ENCODE measurements at regions of chr12 and their contacts with region 1.

Region 1: DNA sequence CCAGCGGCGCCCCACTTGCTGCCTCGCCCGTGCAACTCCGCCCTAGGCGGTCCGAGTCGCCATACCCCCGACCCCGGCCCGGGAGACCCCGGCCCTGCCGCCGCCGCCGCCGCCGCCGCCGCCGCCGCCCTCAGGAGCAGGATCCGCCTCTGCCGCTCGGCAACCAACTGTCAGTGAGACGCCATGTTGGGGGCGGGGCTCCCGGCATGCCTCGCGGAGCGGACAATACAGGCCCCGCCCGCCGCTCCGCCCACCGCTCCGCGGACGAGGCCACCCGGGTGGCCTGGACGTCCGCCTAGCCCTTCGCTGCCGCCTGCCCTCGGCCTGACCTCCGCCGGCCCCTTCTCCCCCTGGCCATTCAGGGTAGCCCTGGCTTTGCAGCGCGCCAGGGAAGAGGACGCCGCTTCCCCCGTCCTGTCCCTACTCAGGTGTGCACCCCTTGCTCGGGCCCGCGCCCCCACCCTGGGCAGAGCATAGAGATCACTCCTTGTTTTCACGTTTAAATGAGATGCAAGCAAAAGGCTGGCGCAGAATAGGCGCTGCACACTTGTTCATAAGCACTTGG is at the start of gene HECTD4:
- DNase-seq: peak; percentile 75 to 97
- H3K4me3 ChIP-seq: peak within 1 kb of the TSS; percentile 78 to 99
- H3K27ac ChIP-seq: peak within 1 kb of the TSS; percentile 68 to 69
- H3K4me1 ChIP-seq: peaks cover 0 to 16% of the 10 kb centered on the region in 2 donors
- H3K27me3 ChIP-seq: no peaks in the 10 kb centered on the region
- CTCF ChIP-seq: no peak
- total RNA-seq, gene HECTD4: 23.7 TPM

Region 2: GRCh38 chr12:111975161-111975931 is 407.0 kb before region 1 on chr12:
- intact Hi-C with region 1: no loop called
- DNase-seq: no peak
- H3K4me3 ChIP-seq: no peak overlapping the region
- H3K27ac ChIP-seq: no peak overlapping the region
- H3K4me1 ChIP-seq: no peaks in the 10 kb centered on the region
- H3K27me3 ChIP-seq: no peaks in the 10 kb centered on the region
- CTCF ChIP-seq: no peak

Region 3: DNA sequence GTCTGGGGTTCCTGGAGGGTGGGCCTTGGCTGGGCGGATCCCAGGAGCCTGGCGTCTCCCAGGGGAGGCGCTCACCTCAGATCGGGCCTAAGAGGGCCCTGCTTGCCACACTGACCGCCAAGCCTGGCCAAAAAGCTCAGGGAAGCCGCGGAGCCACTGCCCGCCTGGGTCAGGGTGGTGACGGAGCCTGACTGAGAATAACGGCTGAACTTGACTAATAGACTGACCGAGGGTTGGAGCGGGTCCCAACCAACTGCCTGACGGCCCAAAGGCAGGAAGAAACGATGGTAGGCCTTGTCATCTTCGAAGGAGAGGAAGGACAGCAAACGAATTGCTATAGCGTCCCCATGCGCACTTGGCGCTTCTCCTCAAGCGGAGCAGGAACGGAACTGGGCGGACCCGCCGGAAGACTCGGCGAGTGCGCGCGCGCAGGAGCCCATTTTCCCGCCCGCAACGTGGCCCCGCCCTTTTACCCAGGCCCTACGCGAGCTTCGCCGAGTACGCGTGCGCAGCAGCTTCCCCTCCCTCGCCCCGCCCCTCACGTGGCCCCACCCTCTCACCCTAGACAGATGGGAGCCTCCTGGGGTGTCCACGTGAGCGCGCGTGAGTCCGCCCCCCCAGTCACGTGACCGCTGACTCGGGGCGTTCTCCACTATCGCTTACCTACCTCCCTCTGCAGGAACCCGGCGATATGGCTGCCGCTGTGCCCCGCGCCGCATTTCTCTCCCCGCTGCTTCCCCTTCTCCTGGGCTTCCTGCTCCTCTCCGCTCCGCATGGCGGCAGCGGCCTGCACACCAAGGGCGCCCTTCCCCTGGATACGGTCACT is 369.3 kb before region 1 on chr12 and contains the starts of genes ERP29 and TMEM116:
- intact Hi-C with region 1: loop called (anchors 10 kb)
- DNase-seq: peak; percentile 97 to 100
- H3K4me3 ChIP-seq: peak within 1 kb of the TSS; percentile 85
- H3K27ac ChIP-seq: peak within 1 kb of the TSS; percentile 97 to 99
- H3K4me1 ChIP-seq: peaks cover 3 to 20% of the 10 kb centered on the region in 2 donors
- H3K27me3 ChIP-seq: no peaks in the 10 kb centered on the region
- CTCF ChIP-seq: peak; percentile 77 to 85 (median 82)
- total RNA-seq, gene ERP29: 21.6 TPM
- total RNA-seq, gene TMEM116: 2.2 TPM

Region 4: DNA sequence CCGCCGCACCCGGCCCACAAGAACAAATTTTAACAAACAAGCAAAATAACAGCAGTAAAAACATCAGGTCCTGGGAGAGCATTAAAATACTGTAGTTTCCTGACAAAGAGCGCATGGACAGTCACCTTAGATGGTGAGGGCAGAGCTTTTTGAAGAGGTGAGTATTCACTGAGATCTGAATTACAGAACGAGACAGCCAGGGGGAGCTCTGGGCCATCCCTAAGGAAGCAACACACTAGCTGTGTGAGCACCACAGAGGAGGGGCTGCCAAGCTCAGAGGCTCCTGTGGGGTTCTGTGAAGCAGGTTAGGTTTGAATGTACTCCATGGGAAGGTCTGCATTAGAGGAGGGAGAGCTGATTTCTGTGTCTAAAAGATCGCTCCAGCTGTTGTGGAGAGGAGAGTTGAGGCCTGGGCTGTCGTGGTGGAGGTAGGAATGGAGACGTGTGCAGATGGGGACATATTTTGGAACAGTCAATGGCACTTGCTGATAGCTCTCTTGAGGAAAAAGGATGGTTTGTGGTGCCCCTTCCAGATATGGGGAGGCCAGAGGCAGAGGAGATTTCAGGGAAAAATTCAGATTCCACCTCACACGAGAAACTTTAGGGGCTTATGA is 184.1 kb before region 1 on chr12:
- intact Hi-C with region 1: loop called (anchors 2 kb)
- DNase-seq: no peak
- H3K4me3 ChIP-seq: no peak overlapping the region
- H3K27ac ChIP-seq: no peak overlapping the region
- H3K4me1 ChIP-seq: no peaks in the 10 kb centered on the region
- H3K27me3 ChIP-seq: no peaks in the 10 kb centered on the region
- CTCF ChIP-seq: peak in 2 of 3 experiments; percentile 15 to 42

Region 5: DNA sequence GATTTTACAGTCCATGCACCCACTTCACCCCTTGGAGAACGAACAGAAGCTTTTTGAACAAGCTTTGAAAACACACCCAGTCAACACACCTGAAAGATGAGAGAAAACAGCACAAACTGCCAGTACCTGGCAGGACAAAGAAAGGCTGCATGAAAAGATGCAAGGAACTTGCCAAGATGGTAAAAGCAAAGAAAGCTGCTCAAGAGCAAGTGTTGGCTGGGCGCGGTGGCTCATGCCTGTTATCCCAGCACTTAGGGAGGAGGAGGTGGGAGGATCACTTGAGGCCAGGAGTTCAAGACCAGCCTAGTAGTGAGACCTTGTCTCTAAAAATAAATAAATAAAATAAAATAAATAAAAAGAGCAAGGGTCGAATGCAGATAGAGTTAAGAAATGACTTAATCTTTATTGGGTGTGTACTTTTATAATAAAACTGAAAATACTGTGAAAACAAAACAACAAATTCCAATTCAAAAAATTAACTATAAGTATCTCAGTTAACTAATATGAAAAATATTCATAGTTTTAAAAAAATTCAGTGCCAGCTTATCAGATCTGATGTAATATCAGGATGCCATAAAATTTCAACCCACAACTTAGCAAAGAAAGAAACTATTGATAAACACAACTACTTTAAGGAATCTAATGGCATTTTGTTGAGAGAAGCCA is 59.3 kb before region 1 on chr12:
- intact Hi-C with region 1: loop called (anchors 5 kb)
- DNase-seq: no peak
- H3K4me3 ChIP-seq: no peak overlapping the region
- H3K27ac ChIP-seq: no peak overlapping the region
- H3K4me1 ChIP-seq: no peaks in the 10 kb centered on the region
- H3K27me3 ChIP-seq: no peaks in the 10 kb centered on the region
- CTCF ChIP-seq: no peak

Region 6: DNA sequence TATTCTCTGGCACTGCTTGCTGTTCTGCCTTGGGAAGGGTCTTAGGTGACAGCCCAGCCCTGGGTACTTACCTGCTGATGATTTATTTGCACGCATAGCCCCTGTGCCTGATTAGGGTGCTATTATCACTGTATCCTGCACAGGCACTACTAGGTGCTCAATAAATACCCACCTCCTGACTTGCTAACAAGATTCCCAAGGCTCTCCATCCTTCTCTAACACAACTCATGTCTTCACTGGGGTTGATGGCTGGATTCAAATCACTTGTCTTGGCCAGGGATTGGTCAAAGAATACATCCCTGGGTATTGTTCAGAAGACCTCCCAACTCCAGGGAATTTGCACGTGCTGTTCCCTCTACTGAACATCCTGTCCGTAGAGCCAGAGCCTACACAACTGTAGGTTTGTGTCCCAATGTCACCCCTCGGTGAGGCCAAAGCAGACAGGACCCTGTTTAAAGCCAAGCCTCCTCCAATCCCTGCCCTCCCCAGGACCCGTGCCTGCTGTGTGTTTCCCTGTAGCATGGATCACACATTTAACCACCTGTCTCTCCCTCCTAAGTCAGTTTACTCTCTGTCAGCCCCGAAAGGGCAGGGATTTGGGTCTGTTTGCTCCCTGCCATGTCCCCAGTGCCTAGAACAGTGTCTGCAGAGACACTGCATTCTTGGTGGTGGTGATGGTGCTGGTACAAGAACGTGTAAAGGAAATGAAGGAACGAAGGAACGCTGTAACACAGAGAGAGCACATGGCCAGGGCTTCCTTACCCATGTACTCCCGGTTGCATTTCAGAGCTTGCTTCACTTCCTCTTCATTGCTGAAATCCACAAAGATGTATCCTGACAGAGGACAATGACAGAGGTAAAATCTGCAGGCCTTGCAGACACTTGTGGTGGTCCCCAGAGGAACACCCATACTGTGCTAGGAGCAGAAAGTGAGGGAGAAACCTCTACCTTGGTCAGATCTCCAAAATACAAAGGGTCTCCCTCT is 1567.3 kb after region 1 on chr12:
- intact Hi-C with region 1: no loop called
- DNase-seq: no peak
- H3K4me3 ChIP-seq: no peak overlapping the region
- H3K27ac ChIP-seq: no peak overlapping the region
- H3K4me1 ChIP-seq: no peaks in the 10 kb centered on the region
- H3K27me3 ChIP-seq: no peaks in the 10 kb centered on the region
- CTCF ChIP-seq: no peak